Panc1 (cell line): ENCODE measurements at regions of chr13 and their contacts with region 1.

Region 1: DNA sequence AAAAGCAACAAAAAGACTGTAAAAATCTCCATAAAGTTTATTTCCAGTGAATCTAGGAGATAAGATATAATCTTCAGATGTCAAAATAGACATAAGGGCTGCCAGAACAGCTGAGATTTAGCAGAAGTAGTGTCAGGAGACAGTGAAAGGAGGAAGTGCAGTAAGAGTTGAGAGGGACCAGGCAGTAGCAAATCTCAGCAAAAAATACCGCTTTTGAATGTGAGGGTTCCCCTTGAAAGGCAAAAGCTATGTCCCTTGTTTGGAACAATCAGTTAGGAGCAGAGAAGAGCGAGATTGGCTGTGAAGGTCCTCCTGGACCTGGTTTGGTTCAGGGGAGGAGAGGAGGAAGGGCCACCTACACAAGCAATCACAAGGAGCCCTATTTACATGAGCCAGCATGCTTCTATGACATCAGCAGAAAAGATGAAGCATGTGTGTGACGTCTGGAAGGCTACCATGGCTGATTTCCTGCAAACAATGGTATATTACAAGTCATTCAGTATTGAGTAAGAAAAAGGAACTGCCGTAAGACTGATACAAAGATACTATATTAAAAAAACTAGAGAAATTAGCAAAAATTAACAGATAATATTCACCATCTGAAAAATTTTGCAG is 98.9 kb upstream of the SIAH3 start:
- DNase-seq: no peak
- ATAC-seq: no peak
- H3K4me3 ChIP-seq: no peak overlapping the region
- H3K27ac ChIP-seq: no peak overlapping the region
- H3K4me1 ChIP-seq: no peaks in the 10 kb centered on the region
- H3K27me3 ChIP-seq: no peaks in the 10 kb centered on the region
- CTCF ChIP-seq: no peak

Region 2: GRCh38 chr13:45966715-45967114 is 16.2 kb after region 1 on chr13:
- CTCF ChIA-PET with region 1: no interaction called
- POLR2A ChIA-PET with region 1: no interaction called
- in situ Hi-C with region 1: no loop called
- intact Hi-C with region 1: loop called (anchors 1 kb)
- DNase-seq: no peak
- ATAC-seq: no peak
- H3K4me3 ChIP-seq: no peak overlapping the region
- H3K27ac ChIP-seq: no peak overlapping the region
- H3K4me1 ChIP-seq: no peaks in the 10 kb centered on the region
- H3K27me3 ChIP-seq: no peaks in the 10 kb centered on the region
- CTCF ChIP-seq: no peak